ENCODE measurements at regions of chr7 and their contacts with region 1.

Region 1: GRCh38 chr7:151110941-151111645 is 24.8 kb downstream of the AGAP3 start:
- DNase-seq: peak; percentile 96
- H3K4me3 ChIP-seq: no peak overlapping the region; a peak in 1 of 4 replicates
- H3K27ac ChIP-seq: no peak overlapping the region
- H3K4me1 ChIP-seq: peaks cover 24 to 36% of the 10 kb centered on the region in 2 experiments
- H3K27me3 ChIP-seq: no peaks in the 10 kb centered on the region
- CTCF ChIP-seq: peak; percentile 94
- EP300 ChIP-seq: no peak
- RAD21 ChIP-seq: peak; percentile 90

Region 2: GRCh38 chr7:151028131-151028947 is 82.8 kb before region 1 on chr7 and contains the start of gene ABCB8:
- CTCF ChIA-PET with region 1: interaction called, 73 read pairs
- POLR2A ChIA-PET with region 1: interaction called, 4 read pairs
- DNase-seq: peak; percentile 100
- H3K4me3 ChIP-seq: peak within 1 kb of the TSS; percentile 84 to 85
- H3K27ac ChIP-seq: peak within 1 kb of the TSS; percentile 69 to 90
- H3K4me1 ChIP-seq: peaks cover 7 to 10% of the 10 kb centered on the region in 2 experiments; a peak in 2 of 4 replicates
- H3K27me3 ChIP-seq: no peaks in the 10 kb centered on the region
- CTCF ChIP-seq: peak; percentile 59
- EP300 ChIP-seq: no peak
- RAD21 ChIP-seq: peak; percentile 83
- polyA plus RNA-seq, gene ABCB8: 36.0 and 38.3 TPM in 2 replicates

Region 3: DNA sequence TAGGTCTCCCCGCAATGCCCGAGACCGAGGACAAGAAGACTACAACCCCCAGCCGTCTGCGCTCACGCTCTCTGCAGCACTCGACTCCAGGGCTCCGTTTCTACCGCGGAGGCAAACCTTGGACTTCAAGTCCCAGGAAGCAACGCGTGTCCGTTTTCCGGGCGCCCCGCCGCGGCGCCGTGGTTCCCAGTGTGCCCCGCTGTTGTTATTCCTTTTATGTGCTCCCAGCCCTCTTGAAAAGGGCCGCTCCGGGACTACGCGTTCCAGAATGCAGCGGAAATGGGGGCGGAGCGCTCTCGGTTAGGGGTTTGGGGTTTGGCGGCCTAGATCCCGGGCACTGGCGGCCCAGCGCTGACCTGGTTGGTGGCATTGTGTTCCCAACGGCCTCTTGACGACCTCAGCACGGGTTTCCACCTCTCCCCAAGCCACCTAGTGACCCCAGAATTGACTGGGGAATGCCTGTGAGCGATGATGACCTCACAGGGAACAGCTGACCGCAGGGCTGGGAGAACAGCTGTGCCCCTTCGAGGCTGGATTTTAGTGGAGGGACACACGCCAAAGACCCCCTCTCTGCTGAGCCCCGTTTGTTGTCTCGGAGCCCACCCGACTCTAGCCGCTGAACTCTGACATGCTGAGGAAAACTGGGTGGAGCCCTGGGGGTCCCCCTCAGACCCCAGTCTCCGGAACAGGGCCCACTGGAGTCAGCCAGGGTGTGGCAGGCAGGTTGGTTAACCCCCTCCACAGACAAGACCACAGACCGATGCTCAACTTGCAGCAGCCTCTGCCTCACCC is 52.9 kb before region 1 on chr7:
- CTCF ChIA-PET with region 1: interaction called, 126 read pairs
- POLR2A ChIA-PET with region 1: interaction called, 5 read pairs
- DNase-seq: peak; percentile 99
- H3K4me3 ChIP-seq: peak overlapping the region; percentile 66 to 99
- H3K27ac ChIP-seq: peak overlapping the region; percentile 95 to 99
- H3K4me1 ChIP-seq: peaks cover 28 to 52% of the 10 kb centered on the region in 2 experiments
- H3K27me3 ChIP-seq: no peaks in the 10 kb centered on the region
- CTCF ChIP-seq: no peak
- EP300 ChIP-seq: no peak
- RAD21 ChIP-seq: no peak

Region 4: GRCh38 chr7:151095123-151095797 is 15.8 kb before region 1 on chr7:
- CTCF ChIA-PET with region 1: interaction called, 474 read pairs
- POLR2A ChIA-PET with region 1: interaction called, 4 read pairs
- DNase-seq: no peak
- H3K4me3 ChIP-seq: no peak overlapping the region
- H3K27ac ChIP-seq: no peak overlapping the region; a peak in 1 of 4 replicates
- H3K4me1 ChIP-seq: peaks cover 0 to 3% of the 10 kb centered on the region in 2 experiments; a peak in 1 of 4 replicates
- H3K27me3 ChIP-seq: no peaks in the 10 kb centered on the region
- CTCF ChIP-seq: no peak; the same call in 1 of the 2 replicates
- EP300 ChIP-seq: no peak
- RAD21 ChIP-seq: peak; percentile 47

Region 5: GRCh38 chr7:151172273-151173141 is 61.4 kb after region 1 on chr7:
- CTCF ChIA-PET with region 1: interaction called, 29 read pairs
- POLR2A ChIA-PET with region 1: no interaction called
- DNase-seq: peak; percentile 97
- H3K4me3 ChIP-seq: peak overlapping the region in 1 of 2 experiments; percentile 48; a peak in 1 of 4 replicates
- H3K27ac ChIP-seq: no peak overlapping the region
- H3K4me1 ChIP-seq: peaks cover 0 to 4% of the 10 kb centered on the region in 2 experiments; a peak in 1 of 4 replicates
- H3K27me3 ChIP-seq: peaks cover 60% of the 10 kb centered on the region
- CTCF ChIP-seq: peak; percentile 100
- EP300 ChIP-seq: no peak
- RAD21 ChIP-seq: peak; percentile 97

Region 6: DNA sequence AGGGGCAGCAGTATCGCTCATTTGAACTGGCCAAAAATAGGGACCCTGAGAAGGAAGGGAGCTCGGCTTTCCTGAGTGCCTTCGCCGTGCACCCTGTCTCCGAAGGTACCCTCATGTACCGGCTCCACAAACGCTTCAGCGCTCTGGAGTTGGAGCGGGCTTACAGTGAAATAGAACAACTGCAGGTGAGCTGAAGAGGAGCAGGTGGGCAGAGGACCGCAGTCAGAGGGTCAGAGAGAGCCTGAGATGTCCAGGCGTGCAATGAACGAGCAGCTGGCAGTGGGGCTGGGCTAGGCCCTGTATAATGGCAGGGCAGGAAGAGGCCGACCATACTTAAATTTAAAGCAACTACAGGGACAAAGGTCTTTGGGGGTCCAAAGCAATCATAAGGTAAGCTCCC is 125.3 kb after region 1 on chr7:
- CTCF ChIA-PET with region 1: no interaction called
- POLR2A ChIA-PET with region 1: no interaction called
- DNase-seq: no peak
- H3K4me3 ChIP-seq: no peak overlapping the region
- H3K27ac ChIP-seq: no peak overlapping the region
- H3K4me1 ChIP-seq: peaks cover 6 to 17% of the 10 kb centered on the region in 2 experiments
- H3K27me3 ChIP-seq: no peaks in the 10 kb centered on the region
- CTCF ChIP-seq: no peak
- EP300 ChIP-seq: no peak
- RAD21 ChIP-seq: no peak

Measured in SK-N-SH (cell line).